Panc1 (cell line): ENCODE measurements at regions of chr1 and their contacts with region 1.

Region 1: GRCh38 chr1:187249196-187249595 is 420.4 kb downstream of the PLA2G4A start:
- DNase-seq: no peak
- ATAC-seq: no peak
- H3K4me3 ChIP-seq: no peak overlapping the region
- H3K27ac ChIP-seq: no peak overlapping the region
- H3K4me1 ChIP-seq: no peaks in the 10 kb centered on the region
- H3K27me3 ChIP-seq: no peaks in the 10 kb centered on the region
- CTCF ChIP-seq: no peak

Region 2: DNA sequence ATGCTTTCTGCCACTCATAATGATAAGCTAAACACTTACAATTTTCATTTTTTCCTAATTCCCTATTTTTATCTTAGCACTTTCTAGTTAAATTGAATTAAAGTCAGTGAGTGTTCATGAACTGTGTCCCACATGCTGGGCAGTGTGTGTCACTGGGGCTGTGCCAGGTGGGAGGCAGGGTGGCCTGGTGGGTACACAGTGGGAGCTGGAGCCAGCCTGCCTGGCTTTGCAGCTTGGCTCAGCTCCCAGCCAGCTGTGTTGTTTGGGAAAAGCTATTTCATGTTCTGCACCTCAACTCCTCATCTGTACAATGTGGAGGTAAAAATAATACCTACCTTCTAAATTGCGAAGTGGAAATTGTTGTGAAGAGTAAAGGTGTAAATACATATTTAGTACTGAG is 182.0 kb before region 1 on chr1:
- CTCF ChIA-PET with region 1: interaction called, 10 read pairs
- POLR2A ChIA-PET with region 1: no interaction called
- in situ Hi-C with region 1: no loop called
- intact Hi-C with region 1: no loop called
- DNase-seq: no peak
- ATAC-seq: no peak
- H3K4me3 ChIP-seq: no peak overlapping the region
- H3K27ac ChIP-seq: no peak overlapping the region
- H3K4me1 ChIP-seq: no peaks in the 10 kb centered on the region
- H3K27me3 ChIP-seq: no peaks in the 10 kb centered on the region
- CTCF ChIP-seq: no peak

Region 3: DNA sequence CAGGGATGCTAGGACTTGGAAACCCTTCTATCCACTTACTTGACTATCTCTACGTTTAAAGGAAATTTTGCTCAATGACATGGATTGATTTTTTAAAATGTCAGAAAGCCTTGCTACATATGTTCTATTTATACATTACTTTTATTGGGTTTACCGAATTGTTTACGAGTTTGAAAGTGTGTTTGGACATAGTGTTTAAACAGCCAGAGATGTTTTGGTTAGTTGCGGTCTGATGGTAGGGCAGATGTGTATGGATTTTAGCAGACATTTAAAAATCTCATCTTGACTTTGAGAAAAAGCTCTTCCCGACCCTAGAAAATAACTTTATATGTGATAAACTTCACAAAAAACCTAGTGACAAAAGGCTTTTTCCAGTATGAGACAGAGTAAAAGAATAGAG is 93.3 kb after region 1 on chr1:
- CTCF ChIA-PET with region 1: no interaction called
- POLR2A ChIA-PET with region 1: no interaction called
- in situ Hi-C with region 1: no loop called
- intact Hi-C with region 1: no loop called
- DNase-seq: no peak
- ATAC-seq: no peak
- H3K4me3 ChIP-seq: no peak overlapping the region
- H3K27ac ChIP-seq: no peak overlapping the region
- H3K4me1 ChIP-seq: no peaks in the 10 kb centered on the region; the same call in 1 of the 2 replicates
- H3K27me3 ChIP-seq: no peaks in the 10 kb centered on the region
- CTCF ChIP-seq: no peak